ENCODE measurements at regions of chr3 and their contacts with region 1.

Region 1: DNA sequence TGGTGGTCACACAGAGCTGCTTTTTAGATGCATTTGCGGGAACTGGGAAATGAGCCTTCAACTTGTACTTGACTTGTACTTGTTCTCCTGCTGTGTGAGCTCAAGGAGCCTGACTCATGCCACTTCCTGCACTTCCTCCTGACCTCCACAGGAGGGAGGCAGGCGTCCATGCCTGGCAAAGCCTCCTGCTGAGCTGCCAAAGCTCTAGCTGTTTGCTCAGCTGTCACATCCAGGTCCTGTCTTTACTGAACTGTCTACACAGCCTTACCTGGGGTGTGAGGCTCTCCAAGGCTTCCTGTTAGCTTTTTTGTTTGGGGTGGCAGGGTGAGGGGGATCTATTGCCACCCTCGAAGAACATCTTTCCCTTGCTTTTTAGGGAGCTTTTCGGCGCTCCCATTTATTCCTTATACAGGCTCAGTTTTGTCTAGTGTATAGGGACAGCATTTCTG is 6.4 kb downstream of the THPO start:
- DNase-seq: peak; percentile 82 to 92 (median 86)
- H3K4me3 ChIP-seq: no peak overlapping the region
- H3K27ac ChIP-seq: no peak overlapping the region
- H3K4me1 ChIP-seq: no peaks in the 10 kb centered on the region
- H3K27me3 ChIP-seq: no peaks in the 10 kb centered on the region
- CTCF ChIP-seq: peak; percentile 92

Region 2: GRCh38 chr3:184543843-184544512 is 172.4 kb after region 1 on chr3:
- intact Hi-C with region 1: loop called (anchors 10 kb)
- DNase-seq: peak in 4 of 5 donors; percentile 90 to 94 (median 91)
- H3K4me3 ChIP-seq: no peak overlapping the region
- H3K27ac ChIP-seq: no peak overlapping the region
- H3K4me1 ChIP-seq: peaks cover 0 to 2% (median 0%) of the 10 kb centered on the region in 3 donors
- H3K27me3 ChIP-seq: no peaks in the 10 kb centered on the region
- CTCF ChIP-seq: peak; percentile 83

Measured in kidney (tissue), 22 donors.